ENCODE measurements at regions of chr10 and their contacts with region 1.

Region 1: DNA sequence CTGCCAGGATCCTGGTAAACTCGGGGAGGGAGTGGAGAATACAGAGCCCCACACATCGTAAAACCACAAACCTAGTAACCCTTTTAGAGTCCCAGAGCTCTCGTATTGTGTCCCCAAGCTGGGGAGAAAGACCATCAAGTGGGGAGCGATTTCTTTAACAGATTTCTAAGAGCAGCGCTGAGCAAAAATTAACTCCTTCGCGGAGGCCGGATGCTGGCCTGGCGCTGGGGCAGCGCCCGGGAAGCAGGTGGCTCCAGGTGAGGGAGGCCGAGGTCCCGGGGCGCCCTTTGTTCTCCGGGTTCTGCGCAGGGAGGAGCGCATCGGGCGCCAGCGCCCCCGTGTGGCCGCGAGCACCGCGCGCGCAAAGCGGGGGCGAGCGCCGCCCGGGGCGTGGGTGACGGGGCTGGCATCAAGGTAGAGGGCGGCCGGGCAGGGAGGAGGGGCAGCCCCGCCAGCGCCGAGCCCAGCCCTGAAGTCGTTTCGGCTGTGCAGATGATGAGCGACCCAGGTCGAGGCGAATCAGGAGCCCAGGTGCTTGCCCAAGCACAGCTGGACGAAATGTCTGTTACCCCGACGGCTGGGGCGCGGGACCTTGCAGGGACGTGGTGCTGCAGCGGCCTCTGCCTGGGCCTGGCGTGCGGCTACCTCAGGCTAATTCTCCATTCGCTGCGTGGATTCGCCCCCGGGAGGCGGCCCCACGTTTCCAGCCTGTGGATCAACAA is 10.4 kb upstream of the FGFR2 start:
- DNase-seq: peak in 1 of 2 donors; percentile 86
- ATAC-seq: peak; percentile 85
- H3K4me3 ChIP-seq: peak overlapping the region in 1 of 2 donors; percentile 29
- H3K27ac ChIP-seq: no peak overlapping the region
- H3K4me1 ChIP-seq: no peaks in the 10 kb centered on the region
- H3K27me3 ChIP-seq: no peaks in the 10 kb centered on the region

Region 2: DNA sequence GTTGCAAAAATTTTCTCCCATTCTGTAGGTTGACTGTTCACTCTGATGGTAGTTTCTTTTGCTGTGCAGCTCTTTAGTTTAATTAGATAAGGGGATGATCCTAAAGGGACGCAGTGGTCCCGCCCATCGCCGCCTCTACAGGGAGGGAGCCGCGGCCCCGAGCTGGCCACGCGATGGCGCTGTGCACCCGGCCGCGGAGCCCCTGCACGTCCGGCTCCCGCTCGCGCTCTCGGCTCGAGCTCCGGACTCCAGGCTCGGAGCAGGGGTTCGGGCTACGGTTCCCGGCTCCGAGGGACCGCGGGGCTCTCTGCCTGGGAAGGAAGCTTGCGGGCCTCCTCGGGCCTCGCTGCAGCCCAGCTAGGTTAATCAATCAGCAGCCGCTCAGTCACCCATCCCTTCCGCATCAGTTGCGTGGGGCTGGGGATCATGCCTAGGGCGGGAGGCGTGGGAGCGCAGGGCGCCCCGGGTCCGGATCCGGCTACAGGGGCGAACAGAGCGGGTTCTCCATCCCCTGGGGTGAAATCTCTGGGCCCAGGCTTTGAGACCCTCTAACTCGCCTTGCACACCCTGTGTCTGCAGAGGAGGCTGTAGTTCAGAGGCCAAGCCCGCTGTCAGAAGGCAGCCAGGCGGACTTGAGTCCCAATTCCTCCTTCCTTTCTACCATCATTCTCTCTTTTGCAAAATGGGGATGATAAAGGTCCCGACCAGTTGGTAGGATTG is 659.6 kb before region 1 on chr10:
- intact Hi-C with region 1: loop called (anchors 2 to 5 kb)
- DNase-seq: peak; percentile 77 to 91
- ATAC-seq: peak; percentile 96
- H3K4me3 ChIP-seq: peak overlapping the region; percentile 3 to 12
- H3K27ac ChIP-seq: no peak overlapping the region
- H3K4me1 ChIP-seq: no peaks in the 10 kb centered on the region
- H3K27me3 ChIP-seq: no peaks in the 10 kb centered on the region

Region 3: DNA sequence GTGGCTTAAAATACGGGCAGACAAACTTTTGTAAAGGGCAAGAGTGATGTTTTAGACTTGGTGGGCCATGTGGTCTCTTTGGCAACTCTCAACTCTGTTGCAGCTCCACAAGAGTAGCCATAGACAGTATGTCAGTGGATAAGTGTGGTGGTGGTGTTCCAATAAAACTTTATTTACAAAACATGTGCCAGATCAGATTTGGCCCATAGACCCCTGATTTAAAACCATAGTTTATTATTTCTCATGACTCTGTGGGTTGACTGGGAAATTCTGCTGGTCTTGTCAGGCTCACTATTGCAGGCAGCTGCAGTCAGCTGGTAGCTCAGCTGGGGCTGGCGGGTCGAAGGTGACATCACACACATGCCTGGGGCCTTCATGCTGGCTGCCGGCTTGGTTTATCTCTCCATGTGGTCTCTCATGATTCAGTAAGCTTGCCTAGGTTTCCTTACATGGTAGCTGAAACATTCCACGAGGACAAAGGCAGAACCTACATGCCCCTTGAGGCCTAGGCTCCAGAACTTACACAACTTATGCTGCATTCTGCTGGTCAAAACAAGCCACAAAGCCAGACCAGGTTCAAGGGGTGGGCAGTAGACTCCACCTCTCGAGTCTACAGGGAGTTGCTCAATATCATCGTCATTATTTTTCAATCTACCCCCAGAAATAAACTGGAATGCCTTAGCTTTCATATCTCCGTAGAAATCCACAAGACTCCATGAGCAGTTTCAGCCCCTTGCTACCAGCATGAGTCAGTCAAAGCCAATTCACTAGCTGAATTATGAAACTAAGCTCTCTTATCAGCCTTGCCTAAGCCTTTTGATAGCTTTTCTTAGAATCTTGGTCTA is 511.8 kb before region 1 on chr10:
- intact Hi-C with region 1: no loop called
- DNase-seq: peak in 1 of 2 donors; percentile 53
- ATAC-seq: peak; percentile 53
- H3K4me3 ChIP-seq: no peak overlapping the region
- H3K27ac ChIP-seq: no peak overlapping the region
- H3K4me1 ChIP-seq: no peaks in the 10 kb centered on the region
- H3K27me3 ChIP-seq: no peaks in the 10 kb centered on the region

Region 4: GRCh38 chr10:121668314-121669027 is 59.8 kb after region 1 on chr10:
- intact Hi-C with region 1: loop called in 1 of 2 experiments (anchors 5 kb)
- DNase-seq: peak; percentile 79 to 81
- ATAC-seq: peak; percentile 74
- H3K4me3 ChIP-seq: no peak overlapping the region
- H3K27ac ChIP-seq: peak overlapping the region in 1 of 2 donors; percentile 74
- H3K4me1 ChIP-seq: no peaks in the 10 kb centered on the region
- H3K27me3 ChIP-seq: no peaks in the 10 kb centered on the region

Region 5: GRCh38 chr10:121959671-121960070 is 351.0 kb after region 1 on chr10:
- intact Hi-C with region 1: no loop called
- DNase-seq: no peak
- ATAC-seq: no peak
- H3K4me3 ChIP-seq: no peak overlapping the region
- H3K27ac ChIP-seq: no peak overlapping the region
- H3K4me1 ChIP-seq: no peaks in the 10 kb centered on the region
- H3K27me3 ChIP-seq: no peaks in the 10 kb centered on the region